ENCODE measurements at regions of chrX and their contacts with region 1.

Region 1: GRCh38 chrX:3651276-3651675 is 62.2 kb downstream of the PRKX start:
- DNase-seq: no peak
- H3K4me3 ChIP-seq: no peak overlapping the region
- H3K27ac ChIP-seq: no peak overlapping the region
- H3K4me1 ChIP-seq: no peaks in the 10 kb centered on the region
- H3K27me3 ChIP-seq: no peaks in the 10 kb centered on the region
- CTCF ChIP-seq: peak; percentile 58

Region 2: DNA sequence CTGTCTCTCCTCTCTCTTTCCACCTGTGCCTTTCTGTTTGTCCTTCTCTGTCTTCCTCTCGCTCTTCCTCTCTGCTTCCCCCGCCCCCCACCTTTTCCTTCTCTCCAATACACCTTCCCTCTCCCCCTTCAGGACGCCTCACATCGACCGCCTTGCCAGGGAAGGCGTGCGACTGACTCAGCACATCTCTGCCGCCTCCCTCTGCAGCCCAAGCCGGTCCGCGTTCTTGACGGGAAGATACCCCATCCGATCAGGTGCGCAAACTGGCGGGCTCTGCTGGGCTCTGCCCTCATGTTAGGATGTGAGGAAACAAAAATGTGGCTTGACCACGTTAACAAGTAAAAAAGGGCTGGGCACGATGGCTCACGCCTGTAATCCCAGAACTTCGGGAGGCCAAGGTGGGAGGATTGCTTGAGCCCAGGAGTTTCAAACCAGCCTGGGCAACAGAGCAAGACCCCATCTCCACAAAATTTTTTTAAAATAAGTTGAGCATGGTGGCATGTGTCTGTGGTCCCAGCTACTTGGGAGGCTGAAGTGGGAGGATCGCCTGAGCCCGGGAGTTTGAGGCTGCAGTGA is 574.8 kb before region 1 on chrX:
- intact Hi-C with region 1: no loop called
- DNase-seq: no peak
- H3K4me3 ChIP-seq: no peak overlapping the region
- H3K27ac ChIP-seq: no peak overlapping the region
- H3K4me1 ChIP-seq: no peaks in the 10 kb centered on the region
- H3K27me3 ChIP-seq: no peaks in the 10 kb centered on the region
- CTCF ChIP-seq: no peak

Region 3: DNA sequence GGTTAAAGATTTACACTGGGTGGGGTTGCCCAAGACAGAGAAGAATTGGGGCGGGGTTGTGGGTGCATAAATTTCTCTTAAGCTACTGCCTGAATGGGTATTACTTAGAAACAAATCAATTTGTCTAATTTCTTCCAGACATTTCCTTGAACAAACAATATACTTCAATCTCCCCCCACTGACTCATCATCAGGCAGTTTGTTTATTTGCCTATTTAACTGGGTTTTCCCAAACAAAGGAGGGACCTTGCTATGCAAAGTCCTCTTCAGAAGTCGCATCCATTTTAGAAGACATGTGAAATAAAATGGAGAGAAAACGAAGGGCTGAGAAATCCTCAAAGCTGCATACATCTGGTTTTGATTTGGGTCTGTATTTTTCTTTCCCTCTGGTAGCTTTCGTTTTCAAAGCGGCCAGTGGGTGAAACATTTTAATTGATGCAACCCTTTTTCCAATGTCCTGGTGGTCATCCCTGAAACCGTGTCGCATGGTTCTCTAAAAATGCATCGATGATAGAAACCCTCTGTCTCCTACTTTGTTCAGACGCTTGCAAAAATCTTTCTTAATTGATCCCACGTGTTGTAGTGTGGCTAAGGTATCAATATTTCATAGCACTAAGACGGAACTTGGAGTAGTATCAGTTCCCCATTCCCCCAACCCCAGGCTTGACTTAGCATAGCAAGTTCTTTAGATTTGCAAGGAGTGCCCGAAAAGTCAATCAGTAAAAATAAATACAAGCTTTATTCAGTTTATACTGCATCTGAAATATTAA is 189.7 kb before region 1 on chrX:
- intact Hi-C with region 1: no loop called
- DNase-seq: no peak
- H3K4me3 ChIP-seq: no peak overlapping the region
- H3K27ac ChIP-seq: no peak overlapping the region
- H3K4me1 ChIP-seq: no peaks in the 10 kb centered on the region
- H3K27me3 ChIP-seq: no peaks in the 10 kb centered on the region
- CTCF ChIP-seq: no peak

Region 4: GRCh38 chrX:3504916-3505315 is 146.4 kb before region 1 on chrX:
- intact Hi-C with region 1: no loop called
- DNase-seq: no peak
- H3K4me3 ChIP-seq: no peak overlapping the region
- H3K27ac ChIP-seq: no peak overlapping the region
- H3K4me1 ChIP-seq: no peaks in the 10 kb centered on the region
- H3K27me3 ChIP-seq: no peaks in the 10 kb centered on the region
- CTCF ChIP-seq: no peak

Region 5: DNA sequence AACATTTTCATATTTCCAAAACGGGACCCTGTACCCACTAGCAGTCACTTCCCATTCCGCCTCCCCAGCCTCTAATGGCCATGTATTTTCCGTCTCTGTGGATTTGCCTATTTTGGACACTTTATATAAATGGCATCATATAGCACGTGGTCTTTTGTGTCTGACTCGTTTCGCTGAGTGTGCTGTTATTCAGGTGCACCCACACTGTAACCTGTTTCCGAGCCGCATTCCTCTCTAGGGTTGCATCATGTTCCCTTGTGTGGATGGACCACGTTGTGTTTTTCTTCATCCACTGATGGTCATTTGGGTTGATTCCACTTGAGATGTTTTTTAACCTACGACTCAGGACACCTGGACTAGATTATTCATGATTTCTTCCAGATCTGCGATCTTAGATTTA is 147.3 kb after region 1 on chrX:
- intact Hi-C with region 1: loop called (anchors 10 kb)
- DNase-seq: no peak
- H3K4me3 ChIP-seq: no peak overlapping the region
- H3K27ac ChIP-seq: no peak overlapping the region
- H3K4me1 ChIP-seq: no peaks in the 10 kb centered on the region
- H3K27me3 ChIP-seq: no peaks in the 10 kb centered on the region
- CTCF ChIP-seq: no peak

Region 6: DNA sequence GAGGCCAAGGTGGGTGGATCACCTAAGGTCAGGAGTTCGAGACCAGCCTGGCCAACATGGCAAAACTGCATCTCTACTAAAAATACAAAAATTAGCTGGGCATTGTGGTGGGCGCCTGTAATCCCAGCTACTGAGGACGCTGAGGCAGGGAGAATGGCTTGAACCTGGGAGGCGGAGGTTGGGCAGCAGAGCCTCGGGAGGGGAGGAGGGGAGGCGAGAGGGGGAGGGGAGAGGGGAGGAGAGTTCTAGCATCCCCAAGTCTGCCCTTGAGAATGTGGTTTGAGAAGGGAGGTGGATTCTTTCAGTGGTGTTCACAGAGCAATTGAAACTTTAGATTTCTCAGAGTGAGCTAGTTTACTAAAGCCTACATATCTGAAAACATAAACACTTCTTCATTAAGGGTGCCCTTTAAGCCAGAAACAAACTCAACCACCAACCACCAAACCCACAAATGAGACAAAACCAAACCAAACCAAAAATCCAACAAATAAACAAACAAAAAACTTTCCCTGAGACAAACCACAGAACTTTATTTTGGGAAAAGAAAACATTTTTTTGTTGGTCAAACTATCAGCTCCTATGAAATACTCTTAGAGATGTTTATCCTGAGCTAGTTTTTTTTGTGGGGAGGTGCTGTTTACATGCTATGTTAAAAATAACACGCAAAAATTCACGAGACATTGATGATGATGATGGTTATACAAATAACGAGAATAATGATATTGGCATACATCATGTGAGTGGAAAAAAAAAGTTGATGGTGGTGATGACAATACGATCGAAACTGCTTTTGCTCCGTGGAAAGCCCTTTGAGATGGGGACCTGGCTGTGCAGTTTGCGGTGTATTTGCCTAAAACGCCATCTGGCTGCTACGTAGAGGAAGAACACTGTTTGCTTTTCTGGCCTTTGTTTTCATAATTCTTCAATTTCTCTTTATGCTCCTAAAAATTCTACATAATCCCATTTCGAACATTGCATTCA is 160.3 kb after region 1 on chrX:
- intact Hi-C with region 1: loop called (anchors 2 kb)
- DNase-seq: no peak
- H3K4me3 ChIP-seq: no peak overlapping the region
- H3K27ac ChIP-seq: no peak overlapping the region
- H3K4me1 ChIP-seq: peaks cover 2% of the 10 kb centered on the region
- H3K27me3 ChIP-seq: peaks cover 11% of the 10 kb centered on the region
- CTCF ChIP-seq: peak; percentile 49

Measured in colonic mucosa (tissue), 4 donors.